ENCODE measurements at regions of chr7 and their contacts with region 1.

Region 1: GRCh38 chr7:19146699-19147098 is 1.5 kb upstream of the FERD3L start:
- DNase-seq: no peak
- H3K4me3 Mint-ChIP-seq: no peak overlapping the region
- H3K27ac Mint-ChIP-seq: no peak overlapping the region
- H3K4me1 Mint-ChIP-seq: no peaks in the 10 kb centered on the region
- H3K27me3 Mint-ChIP-seq: peaks cover 38% of the 10 kb centered on the region

Region 2: GRCh38 chr7:19107356-19108146 is 39.1 kb before region 1 on chr7:
- intact Hi-C with region 1: loop called (anchors 5 kb)
- DNase-seq: peak; percentile 60
- H3K4me3 Mint-ChIP-seq: no peak overlapping the region
- H3K27ac Mint-ChIP-seq: no peak overlapping the region
- H3K4me1 Mint-ChIP-seq: no peaks in the 10 kb centered on the region
- H3K27me3 Mint-ChIP-seq: peaks cover 71% of the 10 kb centered on the region